ENCODE measurements at regions of chr17 and their contacts with region 1.

Region 1: GRCh38 chr17:50026901-50027630 is 28.8 kb upstream of the ITGA3 start:
- DNase-seq: peak; percentile 69 to 98 (median 88)
- ATAC-seq: peak; percentile 91 to 95 (median 93)
- H3K4me3 ChIP-seq: peak overlapping the region in 1 of 4 donors; percentile 10
- H3K27ac ChIP-seq: no peak overlapping the region
- H3K4me1 ChIP-seq: peaks cover 0 to 5% (median 4%) of the 10 kb centered on the region in 3 donors
- H3K27me3 ChIP-seq: no peaks in the 10 kb centered on the region
- CTCF ChIP-seq: peak; percentile 94 to 96 (median 94)

Region 2: DNA sequence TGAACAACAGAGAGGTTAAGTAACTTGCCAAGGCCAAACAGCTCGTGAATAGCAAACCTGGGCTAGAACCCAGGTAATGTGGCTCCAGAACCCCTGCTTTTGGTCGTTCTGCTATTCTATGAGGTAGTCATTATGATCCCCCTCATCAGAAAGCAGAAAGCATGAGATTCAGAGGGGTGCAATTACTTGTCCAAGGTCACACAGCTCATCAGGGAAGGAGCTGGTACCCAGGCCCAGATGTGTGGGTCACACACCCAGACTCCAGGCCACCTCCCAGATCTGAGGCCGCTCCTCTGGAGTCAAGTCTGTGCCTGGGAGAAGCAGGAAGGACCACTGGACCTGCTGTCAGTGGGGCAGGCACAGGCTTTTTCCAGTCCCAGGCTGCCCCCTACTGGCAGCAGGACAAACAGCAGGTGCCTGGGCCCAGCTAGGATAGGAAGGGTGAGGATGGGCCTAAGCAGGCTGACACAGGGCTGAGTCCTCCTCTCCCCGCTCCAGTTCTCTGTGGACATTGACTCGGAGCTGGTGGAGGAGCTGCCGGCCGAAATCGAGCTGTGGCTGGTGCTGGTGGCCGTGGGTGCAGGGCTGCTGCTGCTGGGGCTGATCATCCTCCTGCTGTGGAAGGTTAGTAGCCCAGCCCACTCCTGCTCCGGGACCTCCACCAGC is 60.3 kb after region 1 on chr17:
- intact Hi-C with region 1: loop called in 2 of 3 experiments (anchors 2 to 5 kb)
- DNase-seq: peak in 5 of 6 donors; percentile 55 to 88 (median 81)
- ATAC-seq: peak; percentile 69 to 93 (median 86)
- H3K4me3 ChIP-seq: no peak overlapping the region
- H3K27ac ChIP-seq: no peak overlapping the region
- H3K4me1 ChIP-seq: no peaks in the 10 kb centered on the region
- H3K27me3 ChIP-seq: no peaks in the 10 kb centered on the region
- CTCF ChIP-seq: peak; percentile 90 to 98 (median 93)

Region 3: GRCh38 chr17:50114849-50115357 is 87.8 kb after region 1 on chr17:
- intact Hi-C with region 1: no loop called
- DNase-seq: peak in 1 of 6 donors; percentile 38
- ATAC-seq: peak in 2 of 4 donors; percentile 8 to 12
- H3K4me3 ChIP-seq: no peak overlapping the region
- H3K27ac ChIP-seq: no peak overlapping the region
- H3K4me1 ChIP-seq: peaks cover 5 to 21% (median 21%) of the 10 kb centered on the region in 3 donors
- H3K27me3 ChIP-seq: no peaks in the 10 kb centered on the region
- CTCF ChIP-seq: peak in 2 of 4 donors; percentile 20 to 21